ENCODE measurements at regions of chr1 and their contacts with region 1.

Region 1: DNA sequence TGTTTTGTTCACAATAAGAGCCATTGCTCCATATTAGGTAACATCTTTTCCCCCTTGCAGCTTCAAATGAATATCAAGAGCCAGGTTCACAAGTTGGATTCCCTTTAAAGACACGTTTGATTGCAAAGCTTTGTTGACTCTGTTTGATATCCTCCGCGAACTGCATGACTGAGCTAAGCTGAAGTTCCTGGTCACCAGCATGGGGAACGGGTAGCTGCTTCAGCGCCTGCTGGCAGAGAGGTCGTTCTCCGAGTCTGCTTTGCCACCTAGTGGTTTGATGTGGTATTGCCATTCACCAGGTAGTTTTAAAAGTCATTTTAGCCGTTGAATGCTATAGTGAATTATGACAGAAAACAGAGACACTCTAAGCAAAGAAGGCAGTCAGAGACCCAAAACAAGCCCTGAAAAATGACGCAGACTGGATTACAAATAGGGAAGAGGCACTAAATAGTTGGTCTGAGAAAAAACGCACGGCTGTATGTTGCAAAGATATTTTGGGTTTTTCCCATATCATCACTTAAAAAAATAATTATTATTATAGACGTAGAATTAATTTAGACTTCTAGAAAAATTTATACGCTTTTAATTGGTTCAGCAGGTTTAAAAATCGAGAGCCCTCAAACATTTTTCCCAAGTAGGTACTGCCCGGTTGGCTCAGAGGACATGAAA is 193.5 kb upstream of the FMN2 start:
- DNase-seq: peak; percentile 94
- ATAC-seq: peak; percentile 84
- H3K4me3 ChIP-seq: no peak overlapping the region
- H3K27ac ChIP-seq: no peak overlapping the region
- H3K4me1 ChIP-seq: peaks cover 15% of the 10 kb centered on the region
- H3K27me3 ChIP-seq: no peaks in the 10 kb centered on the region
- CTCF ChIP-seq: peak; percentile 99

Region 2: DNA sequence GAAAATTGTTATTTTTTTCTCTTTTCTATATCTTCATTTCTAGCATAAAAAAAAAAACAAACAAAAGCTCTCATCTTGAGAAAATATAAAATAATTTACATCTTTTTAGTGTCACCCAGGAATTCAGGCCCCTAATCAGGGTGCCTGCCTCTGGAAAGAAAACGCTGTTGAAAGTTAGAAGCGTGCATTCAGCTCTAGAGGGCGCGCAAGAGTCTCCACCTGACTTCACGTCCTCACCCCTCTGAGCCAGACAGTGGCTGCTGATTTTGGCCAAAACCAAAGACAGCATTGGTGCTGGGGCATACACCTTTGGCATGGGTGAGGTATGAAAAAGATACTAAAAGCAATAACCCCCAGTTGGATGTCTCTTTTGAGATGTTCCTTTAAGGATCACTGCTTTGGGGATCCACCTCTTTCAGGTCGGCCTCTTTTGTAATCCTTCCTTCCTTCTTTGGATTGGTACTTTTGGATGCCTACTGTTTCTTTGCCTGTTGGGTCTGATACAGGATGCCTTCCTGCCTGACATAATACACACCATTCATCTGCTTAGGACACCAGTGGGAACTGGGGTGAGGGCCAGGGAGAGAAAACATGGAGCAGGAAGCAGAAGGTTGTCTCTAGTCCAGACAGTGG is 589.4 kb before region 1 on chr1:
- CTCF ChIA-PET with region 1: interaction called, 3 read pairs
- POLR2A ChIA-PET with region 1: no interaction called
- intact Hi-C with region 1: loop called (anchors 1 kb)
- DNase-seq: peak; percentile 66
- ATAC-seq: peak; percentile 76
- H3K4me3 ChIP-seq: no peak overlapping the region
- H3K27ac ChIP-seq: no peak overlapping the region
- H3K4me1 ChIP-seq: peaks cover 9% of the 10 kb centered on the region
- H3K27me3 ChIP-seq: no peaks in the 10 kb centered on the region
- CTCF ChIP-seq: peak; percentile 91

Region 3: GRCh38 chr1:239558991-239559390 is 339.2 kb before region 1 on chr1:
- CTCF ChIA-PET with region 1: no interaction called
- POLR2A ChIA-PET with region 1: no interaction called
- intact Hi-C with region 1: loop called (anchors 10 kb)
- DNase-seq: peak; percentile 69
- ATAC-seq: peak; percentile 72
- H3K4me3 ChIP-seq: peak overlapping the region; percentile 41
- H3K27ac ChIP-seq: peak overlapping the region; percentile 79
- H3K4me1 ChIP-seq: peaks cover 22% of the 10 kb centered on the region
- H3K27me3 ChIP-seq: no peaks in the 10 kb centered on the region
- CTCF ChIP-seq: no peak

Region 4: GRCh38 chr1:239682046-239682445 is 216.2 kb before region 1 on chr1:
- CTCF ChIA-PET with region 1: no interaction called
- POLR2A ChIA-PET with region 1: no interaction called
- intact Hi-C with region 1: loop called (anchors 2 kb)
- DNase-seq: no peak
- ATAC-seq: no peak
- H3K4me3 ChIP-seq: no peak overlapping the region
- H3K27ac ChIP-seq: peak overlapping the region; percentile 57
- H3K4me1 ChIP-seq: peaks cover 30% of the 10 kb centered on the region
- H3K27me3 ChIP-seq: no peaks in the 10 kb centered on the region
- CTCF ChIP-seq: no peak

Region 5: DNA sequence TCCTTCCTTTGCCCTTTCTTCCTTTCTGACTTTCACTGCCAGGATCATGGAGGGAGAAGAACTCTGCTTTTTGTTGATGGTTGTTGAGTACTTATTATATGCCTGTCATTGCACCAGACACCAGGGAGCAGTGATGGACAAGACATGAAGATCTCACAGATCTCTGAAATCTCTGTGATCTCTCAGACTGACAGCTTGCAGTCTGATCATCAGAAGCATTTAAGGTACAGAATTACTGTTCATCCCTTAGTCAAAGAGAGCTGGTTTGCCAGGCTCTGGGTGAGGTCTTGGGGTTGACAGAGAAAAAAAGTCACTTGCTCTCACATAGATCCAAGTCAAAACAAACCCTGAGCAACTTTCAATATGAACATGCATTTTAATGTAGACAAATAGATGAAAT is 106.0 kb before region 1 on chr1:
- CTCF ChIA-PET with region 1: no interaction called
- POLR2A ChIA-PET with region 1: no interaction called
- intact Hi-C with region 1: loop called (anchors 1 kb)
- DNase-seq: peak; percentile 38
- ATAC-seq: no peak; the same call in 1 of the 2 replicates
- H3K4me3 ChIP-seq: no peak overlapping the region
- H3K27ac ChIP-seq: no peak overlapping the region
- H3K4me1 ChIP-seq: no peaks in the 10 kb centered on the region
- H3K27me3 ChIP-seq: no peaks in the 10 kb centered on the region
- CTCF ChIP-seq: peak; percentile 49